ENCODE measurements at regions of chr1 and their contacts with region 1.

Region 1: DNA sequence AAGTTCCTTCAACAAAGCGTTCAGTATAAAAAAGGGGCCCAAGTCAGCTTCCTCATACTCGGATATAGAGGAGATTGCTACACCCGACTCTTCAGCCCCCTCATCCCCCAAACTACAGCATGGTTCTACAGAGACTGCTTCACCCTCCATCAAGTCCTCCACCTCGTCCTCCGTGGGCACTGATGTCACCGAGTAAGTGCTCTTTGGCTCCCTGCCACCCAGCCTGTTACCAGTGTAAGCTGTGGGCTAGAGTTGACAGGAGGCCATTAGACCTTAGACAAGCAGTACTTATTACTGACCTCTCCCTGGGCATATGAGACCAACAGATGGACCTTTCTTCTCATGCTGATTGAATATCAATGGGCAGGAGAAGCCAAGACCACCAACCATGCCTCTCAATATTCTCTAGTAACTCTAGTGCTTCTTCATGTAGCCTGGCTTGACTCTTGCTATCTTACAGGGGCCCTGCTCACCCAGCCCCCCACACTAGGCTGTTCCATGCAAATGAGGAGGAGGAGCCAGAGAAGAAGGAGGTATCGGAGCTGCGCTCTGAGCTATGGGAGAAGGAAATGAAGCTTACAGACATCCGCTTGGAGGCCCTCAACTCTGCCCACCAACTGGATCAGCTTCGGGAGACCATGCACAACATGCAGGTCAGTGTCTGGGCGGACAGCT is 20.9 kb upstream of the IPO9 start:
- DNase-seq: no peak
- H3K4me3 ChIP-seq: no peak overlapping the region
- CTCF ChIP-seq: no peak

Region 2: DNA sequence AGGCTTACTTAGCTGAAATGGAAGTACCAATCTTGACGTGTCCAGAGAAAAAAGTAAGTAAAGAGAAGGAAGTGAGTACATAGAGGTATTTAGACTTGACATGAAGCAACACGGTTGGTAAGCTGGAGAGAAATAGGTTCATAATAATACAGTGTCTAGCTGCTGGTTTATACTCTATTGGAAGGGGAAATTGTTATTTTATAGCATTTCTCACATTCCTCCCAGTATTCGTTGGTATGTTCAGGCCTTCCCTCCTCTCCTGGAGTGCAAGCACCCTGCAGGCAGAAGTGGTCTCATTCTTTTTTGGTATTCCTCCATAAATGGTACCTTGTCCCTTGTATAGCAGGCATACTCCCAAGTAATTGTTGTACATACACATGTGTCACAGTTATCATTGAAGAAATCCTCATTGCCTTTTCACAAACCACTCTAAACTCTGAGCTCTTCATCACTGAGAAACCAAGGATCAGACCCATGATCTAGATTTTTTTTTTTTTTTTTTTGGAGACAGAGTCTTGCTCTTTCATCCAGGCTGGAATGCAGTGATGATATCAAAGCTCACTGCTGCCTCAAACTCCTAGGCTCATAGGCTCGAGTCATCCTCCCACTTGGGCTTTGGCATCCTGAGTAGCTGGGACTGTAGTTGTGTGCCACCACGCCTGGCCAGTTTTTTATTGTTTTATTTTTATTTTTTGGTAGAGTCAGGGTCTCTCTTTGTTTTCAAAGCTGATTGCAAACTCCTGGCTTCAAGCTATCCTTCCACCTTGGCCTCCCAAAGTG is 11.1 kb after region 1 on chr1:
- CTCF ChIA-PET with region 1: interaction called, 12 read pairs
- POLR2A ChIA-PET with region 1: no interaction called
- DNase-seq: no peak
- H3K4me3 ChIP-seq: no peak overlapping the region
- CTCF ChIP-seq: no peak

Region 3: GRCh38 chr1:201828820-201829774 is 21.0 kb after region 1 on chr1 and contains the start of gene IPO9:
- CTCF ChIA-PET with region 1: interaction called, 41 read pairs
- POLR2A ChIA-PET with region 1: no interaction called
- DNase-seq: no peak
- H3K4me3 ChIP-seq: peak within 1 kb of the TSS; percentile 100
- CTCF ChIP-seq: peak; percentile 89

Measured in AG04449 (cell line).